Activated naive CD4-positive, alpha-beta T cell treated with anti-CD3 and anti-CD28 coated beads, Interleukin-2, amount 10 ng/mL, durations not matched to agents 7 days and 5 days (primary cell): ENCODE measurements at regions of chr19 and their contacts with region 1.

Region 1: GRCh38 chr19:18203863-18204393 is at the start of gene RAB3A:
- DNase-seq: peak; percentile 100
- H3K4me3 Mint-ChIP-seq: peak within 1 kb of the TSS; percentile 96
- H3K27ac Mint-ChIP-seq: peak within 1 kb of the TSS; percentile 94
- H3K4me1 Mint-ChIP-seq: peaks cover 23% of the 10 kb centered on the region
- H3K27me3 Mint-ChIP-seq: peaks cover 29% of the 10 kb centered on the region

Region 2: DNA sequence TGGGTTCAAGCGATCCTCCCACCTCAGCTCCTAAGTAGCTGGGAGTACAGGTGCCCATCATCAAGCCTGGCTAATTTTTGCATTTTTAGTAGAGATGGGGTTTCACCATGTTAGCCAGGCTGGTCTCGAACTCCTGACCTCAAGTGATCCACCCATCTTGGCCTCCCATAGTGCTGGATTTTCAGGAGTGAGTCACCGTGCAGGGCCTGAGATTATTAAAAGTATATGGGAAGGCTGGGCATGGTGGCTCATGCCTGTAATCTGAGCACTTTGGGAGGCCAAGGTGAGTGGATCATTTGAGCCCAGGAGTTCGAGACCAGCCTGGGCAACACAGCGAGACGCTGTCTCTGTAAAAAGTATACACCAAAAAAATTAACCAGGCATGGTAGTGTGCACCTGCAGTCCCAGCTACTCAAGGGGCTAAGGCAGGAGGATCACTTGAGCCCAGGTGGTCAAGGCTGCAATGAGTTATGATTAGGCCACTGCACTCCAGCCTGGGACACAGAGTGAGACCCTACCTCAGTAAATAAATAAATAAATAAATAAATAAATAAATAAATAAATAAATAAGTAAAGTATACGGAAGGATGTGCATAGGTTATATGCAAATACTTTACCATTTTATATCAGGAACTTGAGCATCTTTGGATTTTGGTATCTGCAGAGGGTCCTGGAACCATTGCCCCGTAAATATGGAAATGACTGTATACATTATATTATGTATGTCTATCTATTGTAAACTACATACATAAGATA is 118.0 kb before region 1 on chr19:
- CTCF ChIA-PET with region 1: no interaction called
- DNase-seq: no peak
- H3K4me3 Mint-ChIP-seq: peak overlapping the region; percentile 99
- H3K27ac Mint-ChIP-seq: peak overlapping the region; percentile 98
- H3K4me1 Mint-ChIP-seq: peaks cover 71% of the 10 kb centered on the region
- H3K27me3 Mint-ChIP-seq: no peaks in the 10 kb centered on the region

Region 3: DNA sequence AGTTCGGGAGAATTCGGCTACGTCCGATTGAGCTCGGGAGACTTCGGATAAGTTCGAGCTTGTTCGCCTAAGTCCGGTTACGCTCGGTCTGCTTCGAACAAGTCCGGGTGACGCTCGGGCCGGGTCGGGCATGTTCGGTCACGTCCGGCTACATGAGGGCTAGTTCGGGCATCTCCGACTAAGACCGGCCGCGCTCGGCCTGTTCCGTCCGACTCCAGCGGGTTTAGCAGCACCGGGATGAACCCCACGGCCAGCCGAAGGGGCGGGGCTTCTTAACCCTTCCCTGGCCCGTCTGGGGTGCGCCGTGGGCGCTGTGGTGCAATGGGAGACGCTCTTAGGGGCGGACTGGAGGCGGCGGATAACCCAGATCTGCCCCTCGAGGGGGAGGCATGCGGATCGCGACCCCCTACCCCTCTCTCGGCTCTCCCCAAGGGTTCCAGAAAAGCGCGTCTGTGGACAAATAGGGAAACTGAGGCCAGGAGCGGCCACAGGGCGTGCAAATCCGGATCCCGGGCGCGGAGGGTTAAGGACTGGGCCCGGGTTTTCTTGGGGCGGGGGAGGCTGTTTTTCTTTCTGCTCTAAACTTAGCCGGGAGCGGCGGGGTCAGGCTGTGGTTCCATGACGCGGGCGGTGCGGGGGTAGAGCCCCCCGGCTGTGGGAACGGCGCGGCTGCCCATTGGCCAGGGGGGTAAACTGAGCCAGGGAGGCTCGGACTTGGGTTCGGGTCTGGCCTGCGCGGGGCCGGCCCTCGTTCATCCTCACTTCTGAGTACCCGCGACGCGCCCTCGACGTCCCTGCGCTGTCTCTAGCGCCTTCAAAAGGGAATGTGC is 20.8 kb after region 1 on chr19:
- CTCF ChIA-PET with region 1: interaction called, 11 read pairs
- DNase-seq: peak; percentile 94
- H3K4me3 Mint-ChIP-seq: peak overlapping the region; percentile 73
- H3K27ac Mint-ChIP-seq: no peak overlapping the region
- H3K4me1 Mint-ChIP-seq: peaks cover 21% of the 10 kb centered on the region
- H3K27me3 Mint-ChIP-seq: peaks cover 85% of the 10 kb centered on the region

Region 4: GRCh38 chr19:18696930-18697329 is 493.0 kb after region 1 on chr19:
- CTCF ChIA-PET with region 1: no interaction called
- DNase-seq: no peak
- H3K4me3 Mint-ChIP-seq: no peak overlapping the region
- H3K27ac Mint-ChIP-seq: no peak overlapping the region
- H3K4me1 Mint-ChIP-seq: peaks cover 29% of the 10 kb centered on the region
- H3K27me3 Mint-ChIP-seq: peaks cover 4% of the 10 kb centered on the region